B cell (primary cell): ENCODE measurements at regions of chr16 and their contacts with region 1.

Region 1: DNA sequence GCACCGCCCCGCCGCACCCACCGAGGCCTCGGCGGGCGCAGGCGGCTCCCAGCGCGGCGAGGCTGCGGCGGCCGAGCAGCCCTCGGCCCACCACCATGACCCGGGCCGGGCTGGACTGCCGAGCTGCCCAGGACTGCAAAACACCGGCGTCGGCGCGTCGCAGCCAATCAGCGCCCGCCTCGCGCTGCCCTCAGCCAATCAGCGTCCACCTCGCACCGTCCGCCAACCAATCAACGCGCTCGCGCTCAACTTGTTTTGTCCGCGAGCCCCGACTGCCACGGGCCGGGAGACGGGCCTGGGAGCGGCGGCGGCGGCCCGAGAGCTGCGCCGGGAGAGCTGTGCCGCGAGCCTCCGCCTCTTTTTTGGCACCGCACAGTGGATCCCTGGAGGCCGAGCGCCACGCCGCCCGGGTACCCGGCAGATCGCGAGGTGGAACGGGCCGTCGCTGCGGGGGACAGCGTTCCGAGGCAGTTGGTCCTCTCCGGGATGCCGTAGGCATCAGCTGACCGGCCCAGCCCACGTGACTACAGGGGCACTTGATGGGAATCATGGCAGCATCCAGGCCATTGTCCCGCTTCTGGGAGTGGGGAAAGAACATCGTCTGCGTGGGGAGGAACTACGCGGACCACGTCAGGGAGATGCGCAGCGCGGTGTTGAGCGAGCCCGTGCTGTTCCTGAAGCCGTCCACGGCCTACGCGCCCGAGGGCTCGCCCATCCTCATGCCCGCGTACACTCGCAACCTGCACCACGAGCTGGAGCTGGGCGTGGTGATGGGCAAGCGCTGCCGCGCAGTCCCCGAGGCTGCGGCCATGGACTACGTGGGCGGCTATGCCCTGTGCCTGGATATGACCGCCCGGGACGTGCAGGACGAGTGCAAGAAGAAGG is at the starts of genes FAHD1 and HAGH:
- DNase-seq: peak; percentile 98
- ATAC-seq: peak; percentile 84
- H3K4me3 ChIP-seq: peak within 1 kb of the TSS; percentile 70 to 95 (median 74)
- H3K4me3 Mint-ChIP-seq: peak within 1 kb of the TSS; percentile 98
- H3K27ac ChIP-seq: peak within 1 kb of the TSS; percentile 38 to 81
- H3K27ac Mint-ChIP-seq: peak within 1 kb of the TSS; percentile 96
- H3K4me1 ChIP-seq: peaks cover 25% of the 10 kb centered on the region in 2 donors
- H3K4me1 Mint-ChIP-seq: peaks cover 44% of the 10 kb centered on the region
- H3K27me3 ChIP-seq: no peaks in the 10 kb centered on the region
- H3K27me3 Mint-ChIP-seq: no peaks in the 10 kb centered on the region
- CTCF ChIP-seq: no peak
- total RNA-seq, gene FAHD1: 11.0 and 13.3 TPM in 2 replicates
- total RNA-seq, gene HAGH: 49.7 and 50.6 TPM in 2 replicates

Region 2: DNA sequence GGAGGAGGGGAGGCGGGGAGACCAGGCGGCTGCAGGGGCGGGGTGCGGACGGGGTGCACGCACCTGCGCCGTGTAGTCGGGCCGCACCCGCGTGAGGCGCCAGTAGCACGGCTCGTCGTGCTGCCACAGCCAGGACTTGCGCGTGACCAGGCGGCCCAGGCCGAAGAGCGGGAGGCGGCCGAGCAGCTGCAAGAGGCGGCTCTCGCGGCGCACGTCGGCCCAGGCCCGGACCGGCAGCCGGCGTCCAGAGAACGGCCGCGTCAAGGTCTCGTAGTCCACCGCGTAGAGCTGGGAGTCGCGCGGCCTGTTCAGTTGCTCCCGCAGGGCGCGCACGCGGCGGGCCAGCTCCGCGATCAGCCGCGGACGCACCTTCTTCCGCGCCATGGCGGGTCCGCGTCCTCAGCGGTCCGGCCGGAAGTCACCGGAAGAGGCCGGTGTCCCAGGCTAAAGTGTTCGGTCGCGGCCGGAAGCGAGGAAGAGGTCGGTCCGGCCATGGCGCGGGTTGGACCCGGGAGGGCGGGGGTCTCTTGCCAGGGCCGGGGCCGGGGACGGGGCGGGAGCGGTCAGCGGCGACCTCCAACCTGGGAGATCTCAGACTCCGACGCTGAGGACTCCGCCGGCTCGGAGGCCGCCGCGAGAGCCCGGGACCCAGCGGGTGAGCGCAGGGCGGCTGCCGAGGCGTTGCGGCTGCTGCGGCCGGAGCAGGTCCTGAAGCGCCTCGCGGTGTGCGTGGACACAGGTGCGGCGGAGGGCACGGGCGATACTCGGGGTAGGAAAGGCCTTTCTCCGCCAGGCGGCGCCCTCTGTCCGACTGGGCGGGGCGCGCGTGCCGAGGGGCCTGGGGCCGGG is 54.0 kb before region 1 on chr16 and contains the starts of genes EME2 and MRPS34:
- CTCF ChIA-PET with region 1: no interaction called
- POLR2A ChIA-PET with region 1: interaction called, 3 read pairs
- intact Hi-C with region 1: loop called (anchors 2 kb)
- DNase-seq: peak; percentile 89
- ATAC-seq: peak; percentile 61
- H3K4me3 ChIP-seq: peak within 1 kb of the TSS; percentile 53 to 87 (median 82)
- H3K4me3 Mint-ChIP-seq: peak within 1 kb of the TSS; percentile 95
- H3K27ac ChIP-seq: peak within 1 kb of the TSS; percentile 38 to 90
- H3K27ac Mint-ChIP-seq: peak within 1 kb of the TSS; percentile 97
- H3K4me1 ChIP-seq: peaks cover 22 to 40% of the 10 kb centered on the region in 2 donors
- H3K4me1 Mint-ChIP-seq: peaks cover 27% of the 10 kb centered on the region
- H3K27me3 ChIP-seq: no peaks in the 10 kb centered on the region
- H3K27me3 Mint-ChIP-seq: no peaks in the 10 kb centered on the region
- CTCF ChIP-seq: peak; percentile 88
- total RNA-seq, gene EME2: 42.5 and 43.9 TPM in 2 replicates
- total RNA-seq, gene MRPS34: 44.6 and 54.5 TPM in 2 replicates

Region 3: DNA sequence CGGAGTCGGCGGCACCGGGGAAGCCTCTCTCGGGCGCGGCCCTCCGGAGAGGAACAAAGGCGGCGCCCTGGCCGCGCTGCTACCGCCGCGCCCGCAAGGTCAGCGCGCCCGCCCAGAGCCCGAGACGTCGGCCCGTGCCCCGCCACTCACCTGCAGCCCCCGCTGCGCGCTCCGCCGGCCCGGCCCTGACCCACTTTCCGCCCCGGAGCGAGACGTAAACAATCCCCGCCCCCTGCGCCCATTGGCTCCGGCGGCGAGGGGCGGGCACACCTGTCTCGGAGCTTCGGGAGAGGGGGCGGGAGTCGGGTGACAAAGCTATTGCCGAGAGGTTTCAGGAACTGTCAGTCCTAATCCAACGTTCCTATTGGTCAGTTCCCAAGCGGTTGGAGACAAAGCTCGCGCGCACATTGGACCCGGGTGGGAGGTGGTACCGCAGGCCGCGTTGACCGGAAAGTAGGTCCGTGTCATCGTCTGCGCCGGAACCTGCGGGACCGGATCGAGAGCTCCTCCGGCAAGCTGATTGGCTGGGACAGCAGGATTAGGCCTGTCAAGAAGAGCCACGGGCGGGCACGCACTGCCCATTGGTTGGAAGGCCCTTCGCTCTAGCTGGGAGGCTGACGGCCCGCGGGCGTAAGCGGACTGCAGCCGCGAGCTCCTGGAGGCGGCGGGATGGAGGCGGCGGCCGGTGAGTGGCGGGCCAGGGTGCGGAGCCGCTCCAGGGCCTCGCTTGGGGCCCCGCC is 44.4 kb before region 1 on chr16 and contains the starts of genes NUBP2 and SPSB3:
- CTCF ChIA-PET with region 1: interaction called, 5 read pairs
- POLR2A ChIA-PET with region 1: interaction called, 6 read pairs
- intact Hi-C with region 1: loop called (anchors 1 kb)
- DNase-seq: peak; percentile 99
- ATAC-seq: peak; percentile 85
- H3K4me3 ChIP-seq: peak within 1 kb of the TSS; percentile 75 to 96 (median 83)
- H3K4me3 Mint-ChIP-seq: peak within 1 kb of the TSS; percentile 89
- H3K27ac ChIP-seq: peak within 1 kb of the TSS; percentile 47 to 76
- H3K27ac Mint-ChIP-seq: peak within 1 kb of the TSS; percentile 91
- H3K4me1 ChIP-seq: peaks cover 10 to 31% of the 10 kb centered on the region in 2 donors
- H3K4me1 Mint-ChIP-seq: peaks cover 22% of the 10 kb centered on the region
- H3K27me3 ChIP-seq: no peaks in the 10 kb centered on the region
- H3K27me3 Mint-ChIP-seq: no peaks in the 10 kb centered on the region
- CTCF ChIP-seq: no peak
- total RNA-seq, gene NUBP2: 50.2 and 52.6 TPM in 2 replicates
- total RNA-seq, gene SPSB3: 91.2 and 95.5 TPM in 2 replicates

Region 4: GRCh38 chr16:1812732-1813163 is 14.2 kb before region 1 on chr16:
- CTCF ChIA-PET with region 1: no interaction called
- POLR2A ChIA-PET with region 1: no interaction called
- intact Hi-C with region 1: no loop called
- DNase-seq: no peak
- ATAC-seq: peak; percentile 49
- H3K4me3 ChIP-seq: no peak overlapping the region
- H3K4me3 Mint-ChIP-seq: no peak overlapping the region
- H3K27ac ChIP-seq: no peak overlapping the region
- H3K27ac Mint-ChIP-seq: no peak overlapping the region
- H3K4me1 ChIP-seq: no peaks in the 10 kb centered on the region
- H3K4me1 Mint-ChIP-seq: no peaks in the 10 kb centered on the region
- H3K27me3 ChIP-seq: no peaks in the 10 kb centered on the region
- H3K27me3 Mint-ChIP-seq: no peaks in the 10 kb centered on the region
- CTCF ChIP-seq: no peak